ENCODE measurements at regions of chr6 and their contacts with region 1.

Region 1: GRCh38 chr6:18153311-18153703 is 1.6 kb downstream of the TPMT start:
- DNase-seq: no peak
- H3K4me3 Mint-ChIP-seq: no peak overlapping the region
- H3K27ac Mint-ChIP-seq: no peak overlapping the region
- H3K4me1 Mint-ChIP-seq: peaks cover 27% of the 10 kb centered on the region
- H3K27me3 Mint-ChIP-seq: no peaks in the 10 kb centered on the region

Region 2: GRCh38 chr6:17015144-17015543 is 1138.2 kb before region 1 on chr6:
- CTCF ChIA-PET with region 1: no interaction called
- POLR2A ChIA-PET with region 1: interaction called, 11 read pairs
- DNase-seq: peak; percentile 56
- H3K4me3 Mint-ChIP-seq: peak overlapping the region; percentile 64
- H3K27ac Mint-ChIP-seq: peak overlapping the region; percentile 67
- H3K4me1 Mint-ChIP-seq: peaks cover 20% of the 10 kb centered on the region
- H3K27me3 Mint-ChIP-seq: peaks cover 41% of the 10 kb centered on the region

Region 3: GRCh38 chr6:18122124-18123093 is 30.9 kb before region 1 on chr6 and contains the start of gene NHLRC1:
- CTCF ChIA-PET with region 1: no interaction called
- POLR2A ChIA-PET with region 1: no interaction called
- DNase-seq: peak; percentile 69
- H3K4me3 Mint-ChIP-seq: peak within 1 kb of the TSS; percentile 57
- H3K27ac Mint-ChIP-seq: no peak within 1 kb of the TSS
- H3K4me1 Mint-ChIP-seq: peaks cover 12% of the 10 kb centered on the region
- H3K27me3 Mint-ChIP-seq: peaks cover 54% of the 10 kb centered on the region
- total RNA-seq, gene NHLRC1: 0.08 TPM in 1 of 2 experiments, not detected in the other

Region 4: DNA sequence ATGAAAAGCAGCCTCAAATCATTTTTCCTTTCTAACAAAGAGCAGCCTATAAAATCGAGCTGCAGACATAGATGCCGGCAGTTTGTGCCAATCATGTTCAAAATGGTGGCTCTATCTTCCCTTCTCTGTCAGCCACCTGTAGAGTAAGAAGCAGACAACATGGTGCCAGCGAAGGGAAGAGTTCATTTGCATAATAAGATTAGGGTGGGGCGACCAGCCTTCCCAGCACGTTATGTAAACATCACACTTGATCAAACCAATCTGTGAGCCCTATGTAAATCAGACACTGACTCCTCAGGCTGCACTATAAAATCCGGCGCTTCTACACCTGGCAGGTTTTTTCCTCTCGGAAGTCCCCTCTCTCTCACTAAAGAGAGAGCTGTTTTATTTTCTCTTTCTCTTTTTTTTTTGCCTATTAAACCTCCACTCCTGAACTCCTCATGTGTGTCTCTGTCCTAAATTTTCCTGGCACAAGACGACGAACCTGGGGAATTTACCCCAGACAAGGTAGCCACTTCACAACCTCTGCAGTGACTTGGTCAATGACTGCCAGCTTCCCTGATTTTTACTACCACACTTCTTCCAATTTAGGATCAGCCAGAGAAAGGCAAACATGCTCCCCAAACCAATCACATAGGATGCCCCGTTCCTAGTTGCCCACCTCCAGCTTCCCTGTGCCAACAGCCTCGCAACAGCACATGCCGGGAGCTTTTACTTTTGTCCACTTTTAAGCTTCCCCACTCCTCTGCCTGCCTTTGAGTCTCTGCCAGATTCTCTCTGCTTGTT is 11.3 kb before region 1 on chr6:
- CTCF ChIA-PET with region 1: no interaction called
- POLR2A ChIA-PET with region 1: no interaction called
- DNase-seq: no peak
- H3K4me3 Mint-ChIP-seq: no peak overlapping the region
- H3K27ac Mint-ChIP-seq: no peak overlapping the region
- H3K4me1 Mint-ChIP-seq: no peaks in the 10 kb centered on the region
- H3K27me3 Mint-ChIP-seq: no peaks in the 10 kb centered on the region